ENCODE measurements at regions of chr3 and their contacts with region 1.

Region 1: DNA sequence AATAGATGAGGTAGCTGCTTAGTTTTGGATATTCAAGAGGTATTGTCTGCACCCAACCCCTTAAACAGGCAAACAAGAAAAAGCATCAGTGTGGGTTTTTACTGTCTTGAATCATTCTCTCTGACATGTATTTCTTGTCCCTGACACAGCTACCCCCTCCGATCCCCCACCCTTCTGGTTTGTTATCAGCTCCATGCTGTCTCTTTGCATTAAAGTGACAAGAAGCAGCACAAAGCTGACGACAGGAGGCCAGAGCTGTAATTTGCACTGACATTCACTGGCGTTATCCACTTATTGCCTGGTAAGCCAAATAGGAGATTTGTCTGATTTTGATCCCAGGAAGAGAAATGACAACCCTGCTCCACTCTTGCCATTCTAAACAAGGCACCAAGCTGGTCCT is 83.3 kb upstream of the SNRK start:
- DNase-seq: peak in 1 of 9 experiments; percentile 44
- ATAC-seq: no peak
- H3K4me3 ChIP-seq: no peak overlapping the region
- H3K4me3 Mint-ChIP-seq: no peak overlapping the region
- H3K27ac ChIP-seq: no peak overlapping the region
- H3K27ac Mint-ChIP-seq: no peak overlapping the region
- H3K4me1 ChIP-seq: peaks cover 16% of the 10 kb centered on the region
- H3K4me1 Mint-ChIP-seq: peaks cover 30% of the 10 kb centered on the region
- H3K27me3 ChIP-seq: no peaks in the 10 kb centered on the region
- H3K27me3 Mint-ChIP-seq: no peaks in the 10 kb centered on the region
- CTCF ChIP-seq: no peak

Region 2: GRCh38 chr3:42229942-42230688 is 972.9 kb before region 1 on chr3:
- CTCF ChIA-PET with region 1: no interaction called
- POLR2A ChIA-PET with region 1: no interaction called
- intact Hi-C with region 1: no loop called
- DNase-seq: no peak
- ATAC-seq: no peak
- H3K4me3 ChIP-seq: no peak overlapping the region
- H3K4me3 Mint-ChIP-seq: no peak overlapping the region
- H3K27ac ChIP-seq: no peak overlapping the region
- H3K27ac Mint-ChIP-seq: no peak overlapping the region
- H3K4me1 ChIP-seq: no peaks in the 10 kb centered on the region
- H3K4me1 Mint-ChIP-seq: no peaks in the 10 kb centered on the region
- H3K27me3 ChIP-seq: peaks cover 0 to 2% of the 10 kb centered on the region in 2 experiments
- H3K27me3 Mint-ChIP-seq: peaks cover 17% of the 10 kb centered on the region
- CTCF ChIP-seq: no peak

Region 3: GRCh38 chr3:43180027-43180426 is 23.0 kb before region 1 on chr3:
- CTCF ChIA-PET with region 1: interaction called, 3 read pairs
- POLR2A ChIA-PET with region 1: interaction called, 4 read pairs
- intact Hi-C with region 1: loop called in 1 of 2 experiments (anchors 2 kb)
- DNase-seq: peak in 8 of 9 experiments; percentile 27 to 78 (median 54)
- ATAC-seq: peak; percentile 91
- H3K4me3 ChIP-seq: peak overlapping the region; percentile 10 to 32
- H3K4me3 Mint-ChIP-seq: peak overlapping the region; percentile 77
- H3K27ac ChIP-seq: peak overlapping the region; percentile 49 to 90
- H3K27ac Mint-ChIP-seq: peak overlapping the region; percentile 97
- H3K4me1 ChIP-seq: peaks cover 40% of the 10 kb centered on the region
- H3K4me1 Mint-ChIP-seq: peaks cover 62% of the 10 kb centered on the region
- H3K27me3 ChIP-seq: no peaks in the 10 kb centered on the region
- H3K27me3 Mint-ChIP-seq: no peaks in the 10 kb centered on the region
- CTCF ChIP-seq: no peak

Region 4: DNA sequence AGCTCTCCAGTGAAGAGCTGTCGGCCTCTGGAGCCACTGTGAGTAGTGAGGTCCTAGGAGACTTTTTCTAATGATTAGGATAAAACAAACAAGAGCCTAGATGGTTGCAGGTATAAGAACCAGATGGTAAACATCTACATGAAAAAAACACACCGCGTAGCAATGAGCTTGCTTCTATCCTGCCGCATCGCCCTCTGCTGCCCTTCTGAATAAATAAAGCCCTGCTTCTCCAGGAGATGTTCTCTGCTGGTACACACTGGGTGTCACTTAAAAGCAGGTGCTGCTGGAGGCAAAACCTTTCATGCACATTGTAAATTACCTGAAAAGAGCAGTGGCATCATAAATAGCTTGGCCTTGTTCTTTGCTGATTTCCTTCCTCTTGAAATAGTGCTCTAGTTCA is 874.2 kb after region 1 on chr3:
- CTCF ChIA-PET with region 1: no interaction called
- POLR2A ChIA-PET with region 1: no interaction called
- intact Hi-C with region 1: no loop called
- DNase-seq: no peak
- ATAC-seq: no peak
- H3K4me3 ChIP-seq: no peak overlapping the region
- H3K4me3 Mint-ChIP-seq: no peak overlapping the region
- H3K27ac ChIP-seq: no peak overlapping the region
- H3K27ac Mint-ChIP-seq: no peak overlapping the region
- H3K4me1 ChIP-seq: no peaks in the 10 kb centered on the region
- H3K4me1 Mint-ChIP-seq: no peaks in the 10 kb centered on the region
- H3K27me3 ChIP-seq: no peaks in the 10 kb centered on the region
- H3K27me3 Mint-ChIP-seq: peaks cover under 1% of the 10 kb centered on the region
- CTCF ChIP-seq: no peak